ENCODE measurements at regions of chr3 and their contacts with region 1.

Region 1: DNA sequence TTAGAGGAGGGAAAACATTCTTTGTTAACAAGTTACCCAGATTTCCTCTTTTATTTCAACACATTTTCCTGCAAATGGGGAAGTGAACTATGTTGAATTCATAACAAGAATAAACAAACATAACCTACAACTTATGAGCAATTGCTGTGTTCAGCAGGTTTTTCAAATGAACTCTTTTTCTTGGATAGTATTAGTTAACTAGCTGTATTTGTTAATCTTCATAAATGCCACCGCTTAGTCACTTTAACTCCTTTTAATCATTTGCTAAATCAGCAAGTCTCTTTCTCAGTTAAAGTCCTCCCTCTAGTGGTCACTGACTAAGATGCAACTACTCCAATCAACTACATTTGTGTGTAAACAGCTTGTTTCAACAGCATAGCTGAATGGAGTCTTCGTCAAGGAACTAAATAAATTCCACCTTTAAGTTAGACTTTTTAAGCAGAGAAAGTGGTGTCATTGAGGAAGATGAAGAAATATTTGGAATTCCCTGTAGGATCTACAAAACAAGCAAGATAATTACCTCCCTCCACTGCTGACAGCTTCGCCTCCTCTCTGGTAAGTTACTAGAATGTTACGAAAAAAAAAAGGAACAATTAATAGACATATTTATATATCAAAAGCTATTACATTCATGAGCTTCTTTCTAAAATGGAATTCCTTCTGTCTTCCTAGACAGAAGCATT is 1122.0 kb downstream of the ROBO1 start:
- DNase-seq: no peak
- ATAC-seq: no peak

Region 2: DNA sequence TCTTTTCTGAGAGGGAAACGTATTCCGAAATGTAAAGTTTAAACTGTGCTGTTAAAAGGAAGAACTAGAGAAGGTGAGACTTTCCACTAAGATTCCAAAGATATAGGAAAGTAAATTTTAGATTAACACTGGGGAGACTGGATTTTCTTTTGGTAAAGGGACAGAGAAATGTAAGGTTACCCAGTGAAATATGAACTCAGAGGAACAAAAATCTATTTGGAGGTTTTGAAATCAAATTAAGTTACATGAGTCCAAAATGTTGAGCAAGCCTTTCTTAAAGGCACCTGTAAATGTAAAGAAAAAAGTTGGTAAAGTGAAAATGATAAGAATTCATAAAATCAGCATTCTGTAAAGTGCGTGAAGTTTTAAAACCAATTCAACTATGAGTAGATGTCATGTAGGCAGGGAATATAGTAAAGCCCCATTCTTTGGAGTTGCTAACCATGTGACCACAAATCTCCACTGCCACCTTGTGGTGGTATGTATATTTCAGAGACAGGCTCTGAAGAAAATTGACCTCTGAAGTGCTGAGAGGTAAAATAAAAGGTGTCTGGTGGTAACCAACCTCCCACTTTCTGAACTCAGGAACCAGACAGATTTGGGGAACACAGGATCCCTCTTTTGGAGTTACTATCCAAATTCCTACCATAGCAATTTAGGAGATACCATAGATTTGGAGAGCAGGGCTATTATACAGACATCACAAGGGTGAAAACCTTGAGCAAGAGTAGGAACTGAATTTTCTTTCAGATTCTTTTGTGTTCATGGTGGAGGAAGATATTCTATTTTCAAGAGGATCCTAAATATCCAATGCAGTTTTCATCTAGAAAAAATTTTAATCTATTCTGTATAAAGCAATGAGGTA is 1390.6 kb before region 1 on chr3:
- intact Hi-C with region 1: loop called (anchors 10 kb)
- DNase-seq: no peak
- ATAC-seq: no peak